MCF 10A (cell line): ENCODE measurements at regions of chr1 and their contacts with region 1.

Region 1: DNA sequence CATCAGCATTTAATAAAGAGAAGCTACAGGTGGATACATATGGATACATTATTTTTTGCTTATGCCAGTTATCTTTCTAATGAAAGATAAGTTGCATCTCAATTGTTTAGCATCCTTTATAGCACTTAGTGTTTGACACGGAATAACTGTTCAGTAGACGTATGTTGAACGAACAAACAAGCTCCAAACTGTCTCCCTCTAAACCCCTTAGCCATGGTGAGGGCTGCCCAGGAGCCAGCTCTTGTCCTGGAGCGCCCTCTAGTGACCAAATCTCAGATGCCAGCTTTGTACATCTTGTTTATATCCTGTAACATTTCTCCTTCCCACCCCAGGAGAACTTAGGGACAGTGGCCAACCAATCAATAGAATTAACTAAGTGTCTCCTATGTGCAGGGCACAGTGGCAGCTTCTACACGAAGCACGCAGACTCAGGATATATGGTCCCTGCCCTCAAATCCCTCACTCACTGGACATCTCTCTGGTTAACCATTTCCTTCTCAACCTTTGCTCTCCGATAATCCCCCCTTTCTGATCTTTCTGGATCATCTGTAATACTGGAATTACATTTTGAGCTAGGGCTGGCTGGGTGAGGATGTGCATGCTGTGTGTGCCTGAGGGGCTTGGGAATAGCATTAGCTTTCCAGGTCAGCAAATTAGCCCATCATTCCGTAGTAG is 22.9 kb downstream of the KCNA10 start:
- DNase-seq: peak; percentile 77
- H3K4me3 Mint-ChIP-seq: no peak overlapping the region
- H3K27ac Mint-ChIP-seq: no peak overlapping the region
- H3K4me1 Mint-ChIP-seq: no peaks in the 10 kb centered on the region
- H3K27me3 Mint-ChIP-seq: no peaks in the 10 kb centered on the region
- CTCF ChIP-seq: peak; percentile 92

Region 2: DNA sequence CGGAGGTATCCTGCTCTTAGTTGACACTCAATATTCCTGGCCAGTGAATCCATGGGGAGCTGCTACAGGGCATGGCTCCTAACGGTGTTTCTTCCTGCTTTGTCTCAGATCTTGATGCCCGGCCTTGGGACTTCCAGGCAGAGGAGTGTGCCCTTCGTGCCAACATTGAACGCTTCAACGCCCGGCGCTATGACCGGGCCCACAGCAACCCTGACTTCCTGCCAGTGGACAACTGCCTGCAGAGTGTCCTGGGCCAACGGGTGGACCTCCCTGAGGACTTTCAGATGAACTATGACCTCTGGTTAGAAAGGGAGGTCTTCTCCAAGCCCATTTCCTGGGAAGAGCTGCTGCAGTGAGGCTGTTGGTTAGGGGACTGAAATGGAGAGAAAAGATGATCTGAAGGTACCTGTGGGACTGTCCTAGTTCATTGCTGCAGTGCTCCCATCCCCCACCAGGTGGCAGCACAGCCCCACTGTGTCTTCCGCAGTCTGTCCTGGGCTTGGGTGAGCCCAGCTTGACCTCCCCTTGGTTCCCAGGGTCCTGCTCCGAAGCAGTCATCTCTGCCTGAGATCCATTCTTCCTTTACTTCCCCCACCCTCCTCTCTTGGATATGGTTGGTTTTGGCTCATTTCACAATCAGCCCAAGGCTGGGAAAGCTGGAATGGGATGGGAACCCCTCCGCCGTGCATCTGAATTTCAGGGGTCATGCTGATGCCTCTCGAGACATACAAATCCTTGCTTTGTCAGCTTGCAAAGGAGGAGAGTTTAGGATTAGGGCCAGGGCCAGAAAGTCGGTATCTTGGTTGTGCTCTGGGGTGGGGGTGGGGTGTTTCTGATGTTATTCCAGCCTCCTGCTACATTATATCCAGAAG is 442.3 kb before region 1 on chr1:
- CTCF ChIA-PET with region 1: interaction called, 8 read pairs
- POLR2A ChIA-PET with region 1: no interaction called
- intact Hi-C with region 1: loop called (anchors 10 kb)
- DNase-seq: peak; percentile 57
- H3K4me3 Mint-ChIP-seq: no peak overlapping the region
- H3K27ac Mint-ChIP-seq: peak overlapping the region; percentile 12
- H3K4me1 Mint-ChIP-seq: peaks cover 2% of the 10 kb centered on the region
- H3K27me3 Mint-ChIP-seq: no peaks in the 10 kb centered on the region
- CTCF ChIP-seq: peak; percentile 87

Region 3: DNA sequence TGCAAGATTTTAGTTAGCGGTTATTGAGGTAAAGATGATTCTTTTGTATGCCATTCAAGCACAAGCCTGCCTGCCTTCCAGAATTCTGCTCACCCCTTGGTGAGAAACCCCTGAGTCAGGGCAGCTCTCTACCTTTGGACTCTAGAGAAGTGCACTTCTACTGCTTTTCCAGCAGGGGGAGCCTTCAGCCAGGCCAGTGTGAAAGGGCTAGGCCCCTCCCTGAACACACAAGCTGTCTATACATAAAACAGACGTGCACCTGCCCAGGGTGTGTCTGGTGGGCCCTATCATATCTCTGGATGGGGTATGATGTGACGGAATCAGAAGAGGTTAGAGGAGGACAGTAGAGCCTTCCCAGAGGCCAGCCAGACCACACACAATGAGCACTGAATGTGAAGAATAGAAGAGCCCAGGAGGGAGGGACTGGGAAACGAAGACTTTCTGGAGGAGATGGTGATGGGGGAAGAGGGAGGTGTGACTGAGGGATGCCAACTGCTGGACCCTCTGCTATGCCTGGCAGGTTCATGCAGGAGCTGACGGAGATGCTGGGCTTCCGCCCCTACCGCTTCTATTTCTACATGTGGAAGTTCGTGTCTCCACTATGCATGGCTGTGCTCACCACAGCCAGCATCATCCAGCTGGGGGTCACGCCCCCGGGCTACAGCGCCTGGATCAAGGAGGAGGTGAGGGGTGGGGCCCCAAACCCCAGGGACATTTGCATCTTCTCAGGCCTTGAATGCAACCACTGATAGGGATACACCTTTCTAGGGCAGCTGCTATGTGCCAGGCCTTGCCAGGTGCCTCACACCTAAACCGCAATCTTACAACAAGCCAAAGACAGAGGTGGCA is 298.9 kb before region 1 on chr1:
- CTCF ChIA-PET with region 1: interaction called, 74 read pairs
- POLR2A ChIA-PET with region 1: no interaction called
- intact Hi-C with region 1: no loop called
- DNase-seq: peak; percentile 54
- H3K4me3 Mint-ChIP-seq: no peak overlapping the region
- H3K27ac Mint-ChIP-seq: no peak overlapping the region
- H3K4me1 Mint-ChIP-seq: no peaks in the 10 kb centered on the region
- H3K27me3 Mint-ChIP-seq: no peaks in the 10 kb centered on the region
- CTCF ChIP-seq: peak; percentile 89

Region 4: DNA sequence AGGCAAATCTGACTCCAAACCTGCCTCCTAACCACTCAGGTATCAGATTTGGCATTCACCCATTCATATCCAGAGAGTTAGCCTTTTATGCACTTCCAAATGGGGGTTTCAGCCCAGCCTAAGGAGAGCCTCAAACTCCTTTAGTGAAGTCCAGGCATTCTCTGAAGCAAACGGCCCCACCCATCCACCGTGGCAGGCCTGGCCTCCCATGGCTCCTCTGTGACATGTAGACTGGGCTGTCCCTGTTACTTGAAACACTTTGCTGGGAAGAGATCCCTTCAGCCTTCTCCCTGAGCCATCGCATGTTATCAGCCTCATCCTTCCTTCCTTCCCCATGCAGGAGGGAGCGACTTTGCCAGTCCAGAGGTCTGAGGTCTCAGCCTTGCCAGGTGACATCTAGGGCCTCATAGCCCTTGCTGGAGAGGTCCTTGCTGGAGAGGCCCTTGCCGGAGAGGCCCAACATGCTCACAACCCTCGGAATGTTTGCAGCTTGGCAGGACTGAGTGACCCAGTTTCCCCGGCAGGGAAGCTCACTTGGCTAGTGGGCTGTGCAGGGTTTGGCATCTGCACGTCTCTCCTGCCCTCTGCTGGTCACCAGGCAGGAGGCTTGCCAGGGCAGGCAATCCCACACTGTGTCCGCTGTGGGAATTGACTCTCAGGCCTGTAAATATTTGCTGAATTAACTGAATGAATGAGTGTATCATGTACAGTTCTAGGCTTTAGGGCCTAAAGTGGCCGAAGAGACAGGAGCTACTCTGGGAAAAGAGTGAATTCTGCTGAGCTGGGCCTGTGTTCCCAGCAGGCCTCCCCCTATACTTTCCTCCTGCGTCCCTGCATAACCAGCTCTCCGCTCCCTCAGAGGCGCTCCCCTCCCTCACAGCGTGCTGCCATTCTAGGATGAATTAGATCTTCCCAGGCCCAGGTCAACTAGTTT is 183.6 kb before region 1 on chr1:
- CTCF ChIA-PET with region 1: interaction called, 31 read pairs
- POLR2A ChIA-PET with region 1: interaction called, 4 read pairs
- intact Hi-C with region 1: no loop called
- DNase-seq: peak; percentile 67
- H3K4me3 Mint-ChIP-seq: no peak overlapping the region
- H3K27ac Mint-ChIP-seq: no peak overlapping the region
- H3K4me1 Mint-ChIP-seq: peaks cover 6% of the 10 kb centered on the region
- H3K27me3 Mint-ChIP-seq: no peaks in the 10 kb centered on the region
- CTCF ChIP-seq: peak; percentile 91

Region 5: DNA sequence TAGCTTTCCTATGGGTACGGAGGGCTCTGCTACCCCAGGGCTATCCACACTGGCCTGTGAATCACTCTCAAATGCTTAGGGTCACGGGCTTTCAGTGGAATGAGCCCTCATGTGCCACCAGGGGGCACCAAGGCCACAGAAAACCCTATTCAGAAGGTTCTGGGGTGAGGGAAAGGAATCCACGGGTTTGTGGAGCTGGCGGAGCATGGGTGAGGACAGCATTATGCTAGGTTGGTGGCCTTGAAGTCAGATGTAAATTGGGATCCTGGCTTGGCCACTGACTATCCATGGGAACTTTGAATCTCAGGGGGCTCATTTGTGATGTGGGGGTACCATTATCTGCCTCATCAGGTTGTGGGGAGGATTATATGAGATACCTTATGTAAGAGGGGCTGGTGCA is 83.5 kb before region 1 on chr1:
- CTCF ChIA-PET with region 1: interaction called, 157 read pairs
- POLR2A ChIA-PET with region 1: interaction called, 7 read pairs
- intact Hi-C with region 1: loop called (anchors 1 kb)
- DNase-seq: peak; percentile 84
- H3K4me3 Mint-ChIP-seq: no peak overlapping the region
- H3K27ac Mint-ChIP-seq: peak overlapping the region; percentile 17
- H3K4me1 Mint-ChIP-seq: peaks cover 12% of the 10 kb centered on the region
- H3K27me3 Mint-ChIP-seq: no peaks in the 10 kb centered on the region
- CTCF ChIP-seq: peak; percentile 87

Region 6: DNA sequence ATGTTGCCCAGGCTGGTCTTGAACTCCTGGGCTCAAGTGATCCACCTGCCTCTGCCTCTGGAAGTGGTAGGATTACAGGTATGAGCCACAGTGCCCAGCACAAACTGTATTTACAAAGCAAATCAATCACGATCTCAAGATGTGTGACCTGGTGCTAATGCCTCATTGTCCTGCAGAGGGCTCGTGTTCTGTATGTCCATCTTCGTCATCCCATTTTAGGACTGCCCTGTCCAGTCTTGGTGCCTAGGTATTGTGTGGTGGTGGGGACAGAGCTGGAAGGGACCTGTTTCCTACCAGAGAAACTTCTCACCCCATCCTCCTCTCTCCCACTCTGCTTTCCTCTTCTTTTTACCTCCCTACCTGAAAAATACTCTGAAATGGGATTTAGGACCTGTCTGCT is 24.9 kb before region 1 on chr1:
- CTCF ChIA-PET with region 1: interaction called, 273 read pairs
- POLR2A ChIA-PET with region 1: no interaction called
- intact Hi-C with region 1: loop called (anchors 2 kb)
- DNase-seq: no peak
- H3K4me3 Mint-ChIP-seq: no peak overlapping the region
- H3K27ac Mint-ChIP-seq: no peak overlapping the region
- H3K4me1 Mint-ChIP-seq: peaks cover 2% of the 10 kb centered on the region
- H3K27me3 Mint-ChIP-seq: peaks cover 10% of the 10 kb centered on the region
- CTCF ChIP-seq: no peak

Region 7: DNA sequence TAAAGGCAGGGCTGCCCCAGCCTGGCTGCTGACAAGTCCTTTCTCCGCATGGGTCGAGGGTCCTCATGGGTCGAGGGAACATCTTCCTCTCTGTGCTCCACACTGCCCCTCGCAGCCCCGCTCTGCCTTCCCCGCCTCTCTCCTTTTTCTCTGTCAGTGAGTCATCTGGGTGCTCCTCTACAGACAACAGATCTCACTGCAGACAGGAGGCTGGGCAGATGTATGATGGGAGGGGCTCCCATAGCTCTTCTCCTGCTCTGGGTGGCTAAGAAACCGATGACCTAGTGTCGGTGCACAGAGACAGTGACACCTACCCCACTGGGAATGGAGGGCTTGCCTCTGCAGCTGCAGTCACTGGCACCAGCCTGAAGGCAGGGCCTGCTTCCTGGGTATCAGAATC is 17.4 kb after region 1 on chr1:
- CTCF ChIA-PET with region 1: interaction called, 35 read pairs
- POLR2A ChIA-PET with region 1: no interaction called
- intact Hi-C with region 1: no loop called
- DNase-seq: peak; percentile 8
- H3K4me3 Mint-ChIP-seq: no peak overlapping the region
- H3K27ac Mint-ChIP-seq: no peak overlapping the region
- H3K4me1 Mint-ChIP-seq: peaks cover 5% of the 10 kb centered on the region
- H3K27me3 Mint-ChIP-seq: peaks cover 17% of the 10 kb centered on the region
- CTCF ChIP-seq: no peak